Posterior cingulate gyrus (tissue), 11 donors: ENCODE measurements at regions of chrX and their contacts with region 1.

Region 1: GRCh38 chrX:154019633-154020528 is at the start of gene IRAK1:
- DNase-seq: peak in 5 of 10 donors; percentile 26 to 91 (median 59)

Region 2: GRCh38 chrX:153521034-153521433 is 498.8 kb before region 1 on chrX:
- intact Hi-C with region 1: no loop called
- DNase-seq: peak in 8 of 10 donors; percentile 35 to 94 (median 64)

Region 3: DNA sequence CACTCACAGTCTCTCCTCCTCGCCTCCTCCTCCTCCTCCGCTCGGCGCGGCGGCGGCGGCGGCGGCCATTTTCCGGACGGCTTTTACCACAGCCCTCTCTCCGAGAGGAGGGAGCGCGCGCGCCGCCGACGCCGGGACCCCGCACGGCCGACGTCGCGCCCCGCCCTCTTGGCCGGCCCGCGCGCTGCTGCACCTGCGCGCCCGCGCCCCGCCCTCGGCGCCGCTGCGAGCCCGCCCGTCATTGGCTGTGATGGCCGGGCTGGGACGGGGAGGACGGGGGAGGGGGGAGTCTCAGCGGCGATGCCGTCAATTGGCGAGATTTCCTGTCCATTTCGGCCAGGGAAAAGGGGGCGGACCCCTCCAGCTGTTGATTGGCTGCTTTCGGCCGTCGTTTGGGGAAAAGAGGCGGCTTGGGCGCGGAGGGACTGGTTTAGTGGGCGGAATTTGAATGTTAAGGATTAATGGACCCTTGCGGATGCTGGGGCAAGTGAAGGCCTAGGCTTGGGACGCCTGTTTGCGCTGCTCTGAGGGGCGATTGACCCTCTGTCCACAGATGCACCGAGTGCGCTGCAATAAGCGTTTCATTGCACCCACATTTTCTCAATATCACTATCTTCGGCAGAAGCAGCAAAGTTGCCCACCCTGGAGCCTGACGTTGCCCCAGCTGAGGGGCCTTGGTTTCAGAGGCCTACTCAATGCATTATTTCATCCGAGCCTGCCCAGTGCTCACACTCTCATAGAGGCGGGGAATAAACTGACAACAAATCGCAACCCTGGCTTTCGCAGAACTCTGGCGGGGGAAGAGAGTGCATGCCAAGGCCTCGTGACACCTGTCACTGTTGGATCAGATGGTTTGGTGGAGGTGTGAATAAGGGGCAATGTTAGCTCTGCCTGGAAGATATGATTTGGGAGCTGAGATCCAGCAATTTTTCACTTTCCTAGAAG is 78.0 kb after region 1 on chrX and contains the start of gene MECP2:
- intact Hi-C with region 1: loop called (anchors 10 kb)
- DNase-seq: peak; percentile 84 to 98 (median 90)